ENCODE measurements at regions of chr4 and their contacts with region 1.

Region 1: DNA sequence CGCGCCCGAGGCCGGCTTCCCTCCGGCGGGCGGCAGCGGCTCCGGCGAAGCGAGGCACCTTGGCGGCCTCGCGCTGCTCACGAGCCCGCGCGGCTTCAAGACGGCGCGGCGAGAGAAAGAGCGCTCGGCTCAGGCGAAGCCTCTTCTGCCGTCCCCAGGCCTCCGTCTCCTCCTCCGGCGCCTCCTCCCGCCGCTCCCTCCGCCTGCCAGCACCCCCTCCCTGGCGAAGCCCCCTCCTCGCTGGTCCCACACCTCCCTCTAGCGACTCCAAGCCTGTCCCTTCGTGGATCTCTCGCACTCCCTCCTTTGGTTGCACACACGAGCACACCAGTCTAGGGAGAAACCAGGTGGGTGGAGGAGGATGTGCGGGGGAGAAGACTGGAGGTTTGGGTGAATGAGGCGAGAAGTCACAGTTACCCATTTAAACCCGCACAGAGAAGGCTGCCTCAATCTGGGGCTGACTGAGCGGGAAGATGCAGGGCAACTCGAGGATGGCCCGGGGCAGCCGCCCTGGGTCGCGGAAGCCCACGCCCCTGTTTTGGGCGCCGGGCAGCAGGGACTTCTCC is at the start of gene CAMK2D:
- DNase-seq: peak; percentile 89
- ATAC-seq: peak; percentile 81
- total RNA-seq, gene CAMK2D: 194 TPM

Region 2: GRCh38 chr4:113311047-113311446 is 450.7 kb before region 1 on chr4:
- intact Hi-C with region 1: no loop called
- DNase-seq: no peak
- ATAC-seq: no peak

Region 3: DNA sequence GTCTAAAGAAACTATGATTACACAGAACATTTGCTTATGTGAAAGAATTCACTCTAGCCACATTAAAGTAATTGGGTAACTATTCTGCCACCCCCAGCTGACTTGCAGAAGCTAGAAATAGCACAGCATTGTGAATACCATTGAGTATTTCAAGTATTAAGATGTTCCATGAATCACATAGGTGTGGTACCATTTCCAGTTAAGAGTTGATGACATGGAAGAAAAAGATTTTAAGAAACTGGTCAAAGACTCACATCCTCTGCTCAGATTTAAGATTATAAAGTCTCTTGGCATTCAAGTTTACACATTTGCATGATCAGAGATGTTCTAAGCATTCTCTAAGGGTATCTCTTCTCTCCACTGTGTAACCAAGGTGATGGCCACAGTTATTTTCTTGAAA is 287.7 kb before region 1 on chr4:
- intact Hi-C with region 1: loop called (anchors 5 kb)
- DNase-seq: no peak
- ATAC-seq: no peak

Region 4: GRCh38 chr4:113547487-113548042 is 214.1 kb before region 1 on chr4:
- intact Hi-C with region 1: loop called (anchors 5 kb)
- DNase-seq: peak; percentile 86
- ATAC-seq: peak; percentile 98